B cell (primary cell): ENCODE measurements at regions of chr1 and their contacts with region 1.

Region 1: DNA sequence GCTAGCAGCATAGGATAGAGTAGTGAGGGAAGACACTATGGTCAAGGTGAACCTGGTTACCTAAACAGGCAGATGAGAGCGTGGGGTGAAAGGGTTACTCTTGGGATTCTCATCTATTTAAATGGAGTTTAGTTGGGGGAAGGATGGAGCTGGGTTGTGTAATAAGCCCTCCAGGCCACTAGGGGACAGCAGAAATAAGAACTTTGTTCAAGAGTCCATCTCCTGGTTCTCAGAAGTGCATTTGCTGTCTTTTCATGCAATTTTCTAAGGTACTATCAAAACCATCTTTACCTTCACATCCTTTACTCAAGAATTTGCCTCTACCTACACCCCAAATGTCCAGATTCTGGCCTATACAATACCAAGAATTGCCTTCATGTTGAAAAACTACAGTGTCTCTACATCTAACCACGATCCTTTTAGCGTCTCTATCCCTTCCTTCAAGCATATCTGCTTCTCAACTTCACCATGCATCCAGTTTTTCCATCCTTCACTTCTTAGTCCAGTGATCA is 28.0 kb downstream of the SLAMF1 start:
- DNase-seq: peak; percentile 58
- ATAC-seq: peak; percentile 42
- H3K4me3 ChIP-seq: no peak overlapping the region
- H3K4me3 Mint-ChIP-seq: no peak overlapping the region
- H3K27ac ChIP-seq: peak overlapping the region in 1 of 2 donors; percentile 2
- H3K27ac Mint-ChIP-seq: peak overlapping the region; percentile 8
- H3K4me1 ChIP-seq: peaks cover 35 to 43% of the 10 kb centered on the region in 2 donors
- H3K4me1 Mint-ChIP-seq: peaks cover 59% of the 10 kb centered on the region
- H3K27me3 ChIP-seq: no peaks in the 10 kb centered on the region
- H3K27me3 Mint-ChIP-seq: no peaks in the 10 kb centered on the region
- CTCF ChIP-seq: peak; percentile 79

Region 2: GRCh38 chr1:160629286-160630210 is 10.7 kb after region 1 on chr1:
- CTCF ChIA-PET with region 1: interaction called, 14 read pairs
- POLR2A ChIA-PET with region 1: interaction called, 10 read pairs
- intact Hi-C with region 1: no loop called
- DNase-seq: peak; percentile 61
- ATAC-seq: peak; percentile 50
- H3K4me3 ChIP-seq: no peak overlapping the region
- H3K4me3 Mint-ChIP-seq: peak overlapping the region; percentile 38
- H3K27ac ChIP-seq: peak overlapping the region; percentile 16 to 41
- H3K27ac Mint-ChIP-seq: peak overlapping the region; percentile 59
- H3K4me1 ChIP-seq: peaks cover 84 to 95% of the 10 kb centered on the region in 2 donors
- H3K4me1 Mint-ChIP-seq: peaks cover 92% of the 10 kb centered on the region
- H3K27me3 ChIP-seq: no peaks in the 10 kb centered on the region
- H3K27me3 Mint-ChIP-seq: no peaks in the 10 kb centered on the region
- CTCF ChIP-seq: no peak

Region 3: DNA sequence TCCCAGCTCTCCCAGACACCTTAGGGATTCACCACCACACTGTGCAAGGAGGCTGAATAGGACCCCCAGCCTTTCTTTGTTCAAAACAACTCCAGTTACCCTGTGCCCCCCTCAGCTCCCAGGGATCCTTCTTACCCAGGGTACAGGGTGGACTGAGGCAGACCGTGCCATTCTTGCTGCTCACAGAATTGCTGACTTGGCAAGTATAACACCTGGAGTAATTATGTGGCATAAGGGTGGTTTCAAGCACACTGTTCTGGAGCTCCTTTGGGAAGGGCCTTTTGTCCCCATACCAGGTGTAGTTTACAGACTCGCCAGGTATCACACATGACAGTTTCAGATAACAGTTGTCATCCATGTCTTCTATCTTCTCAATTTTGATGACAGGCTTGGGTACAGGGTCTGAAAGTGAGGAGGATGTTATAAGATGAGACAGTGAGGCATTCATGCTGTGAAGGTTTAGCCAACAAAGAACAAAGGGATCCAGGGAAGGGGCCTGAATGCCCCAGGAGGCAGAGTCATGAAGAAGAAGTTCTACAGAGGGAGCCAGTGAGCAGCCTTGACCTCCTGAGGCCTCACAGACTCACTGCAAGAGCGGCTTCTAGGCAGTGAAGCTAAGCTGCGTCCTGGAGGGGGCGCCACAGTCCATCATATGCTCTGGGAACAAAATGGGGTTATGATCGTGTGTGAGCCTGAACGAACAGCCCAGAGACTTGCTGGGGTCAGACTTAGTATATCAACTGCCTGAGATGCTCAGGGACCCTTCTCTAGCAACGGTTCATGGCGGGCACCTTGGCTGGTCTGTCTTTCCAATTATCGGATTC is 62.5 kb after region 1 on chr1:
- CTCF ChIA-PET with region 1: interaction called, 76 read pairs
- POLR2A ChIA-PET with region 1: no interaction called
- intact Hi-C with region 1: no loop called
- DNase-seq: peak; percentile 89
- ATAC-seq: peak; percentile 93
- H3K4me3 ChIP-seq: no peak overlapping the region
- H3K4me3 Mint-ChIP-seq: no peak overlapping the region
- H3K27ac ChIP-seq: peak overlapping the region in 1 of 2 donors; percentile 82
- H3K27ac Mint-ChIP-seq: peak overlapping the region; percentile 72
- H3K4me1 ChIP-seq: peaks cover 38 to 45% of the 10 kb centered on the region in 2 donors
- H3K4me1 Mint-ChIP-seq: peaks cover 51% of the 10 kb centered on the region
- H3K27me3 ChIP-seq: no peaks in the 10 kb centered on the region
- H3K27me3 Mint-ChIP-seq: no peaks in the 10 kb centered on the region
- CTCF ChIP-seq: peak; percentile 92